Heart right ventricle (tissue), 16 donors: ENCODE measurements at regions of chr14 and their contacts with region 1.

Region 1: DNA sequence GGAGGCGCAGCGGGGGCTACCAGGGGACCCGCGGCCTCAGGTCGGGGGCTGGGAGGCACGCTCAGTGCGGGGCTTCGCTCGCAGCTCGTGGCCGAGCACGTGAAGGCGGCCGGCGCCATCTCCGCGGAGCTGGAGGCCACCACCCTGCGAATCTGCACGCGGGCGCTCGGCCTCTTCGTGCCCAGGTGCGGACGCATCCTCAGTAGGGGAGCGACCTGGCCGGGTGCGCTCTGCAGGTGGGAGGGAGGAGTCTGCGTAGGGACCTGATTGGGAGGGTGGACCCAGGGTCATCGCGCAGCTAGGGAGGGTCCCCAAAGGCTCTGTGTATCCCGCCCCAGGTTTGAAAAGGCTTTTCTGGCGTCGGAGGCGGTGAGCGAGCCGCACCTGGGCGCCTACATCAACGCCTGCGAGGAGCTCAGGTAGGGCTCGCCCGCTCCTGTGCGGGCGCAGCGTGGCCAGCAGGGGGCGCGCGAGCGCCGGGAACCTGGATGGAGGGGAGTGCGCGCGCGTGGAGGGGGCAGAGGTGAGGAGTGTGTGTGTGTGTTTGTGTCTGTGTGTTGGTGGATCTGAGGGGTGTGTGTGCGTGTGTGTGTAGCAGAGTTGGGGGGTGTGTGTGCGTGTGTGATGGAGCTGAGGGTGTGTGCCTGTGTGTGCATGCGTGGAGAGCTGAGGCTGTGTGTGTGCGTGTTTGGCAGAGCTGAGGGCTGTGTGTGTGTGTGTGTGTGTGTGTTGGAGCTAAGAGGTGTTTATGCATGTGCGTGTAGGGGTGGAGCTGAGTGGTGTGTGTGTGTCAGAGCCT is 10.3 kb downstream of the EXOC3L4 start:
- DNase-seq: peak; percentile 50 to 75
- ATAC-seq: peak; percentile 72 to 89 (median 82)
- H3K4me3 ChIP-seq: peak overlapping the region in 1 of 10 donors; percentile 11
- H3K27ac ChIP-seq: no peak overlapping the region
- H3K4me1 ChIP-seq: peaks cover 12 to 43% (median 31%) of the 10 kb centered on the region in 9 donors
- H3K27me3 ChIP-seq: peaks cover 34 to 51% (median 49%) of the 10 kb centered on the region in 7 donors
- CTCF ChIP-seq: peak; percentile 91 to 98 (median 96)

Region 2: DNA sequence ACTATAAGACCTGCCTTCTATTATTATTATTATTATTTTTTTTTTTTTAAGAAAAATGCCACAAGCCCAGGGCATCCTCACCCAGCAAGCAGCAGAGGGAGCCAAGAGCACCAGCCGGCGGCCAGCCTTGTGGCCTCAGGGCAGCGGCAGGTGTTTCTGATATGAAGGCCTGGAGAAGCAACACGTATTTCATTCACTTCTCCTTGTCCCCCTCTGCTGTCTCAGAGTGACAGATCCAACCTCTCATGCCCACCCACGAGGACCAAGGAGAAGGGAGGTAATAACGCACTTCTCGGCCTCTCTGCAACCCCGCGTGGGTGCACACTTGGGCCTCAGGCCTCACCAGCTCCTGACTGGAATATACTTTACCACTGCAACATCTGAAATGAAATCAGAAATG is 72.9 kb before region 1 on chr14:
- intact Hi-C with region 1: no loop called
- DNase-seq: no peak
- ATAC-seq: peak in 3 of 8 donors; percentile 27 to 49 (median 34)
- H3K4me3 ChIP-seq: no peak overlapping the region
- H3K27ac ChIP-seq: peak overlapping the region in 1 of 10 donors; percentile 6
- H3K4me1 ChIP-seq: peaks cover 0 to 53% (median 24%) of the 10 kb centered on the region in 9 donors
- H3K27me3 ChIP-seq: no peaks in the 10 kb centered on the region
- CTCF ChIP-seq: peak in 3 of 9 donors; percentile 4 to 13 (median 9)

Region 3: DNA sequence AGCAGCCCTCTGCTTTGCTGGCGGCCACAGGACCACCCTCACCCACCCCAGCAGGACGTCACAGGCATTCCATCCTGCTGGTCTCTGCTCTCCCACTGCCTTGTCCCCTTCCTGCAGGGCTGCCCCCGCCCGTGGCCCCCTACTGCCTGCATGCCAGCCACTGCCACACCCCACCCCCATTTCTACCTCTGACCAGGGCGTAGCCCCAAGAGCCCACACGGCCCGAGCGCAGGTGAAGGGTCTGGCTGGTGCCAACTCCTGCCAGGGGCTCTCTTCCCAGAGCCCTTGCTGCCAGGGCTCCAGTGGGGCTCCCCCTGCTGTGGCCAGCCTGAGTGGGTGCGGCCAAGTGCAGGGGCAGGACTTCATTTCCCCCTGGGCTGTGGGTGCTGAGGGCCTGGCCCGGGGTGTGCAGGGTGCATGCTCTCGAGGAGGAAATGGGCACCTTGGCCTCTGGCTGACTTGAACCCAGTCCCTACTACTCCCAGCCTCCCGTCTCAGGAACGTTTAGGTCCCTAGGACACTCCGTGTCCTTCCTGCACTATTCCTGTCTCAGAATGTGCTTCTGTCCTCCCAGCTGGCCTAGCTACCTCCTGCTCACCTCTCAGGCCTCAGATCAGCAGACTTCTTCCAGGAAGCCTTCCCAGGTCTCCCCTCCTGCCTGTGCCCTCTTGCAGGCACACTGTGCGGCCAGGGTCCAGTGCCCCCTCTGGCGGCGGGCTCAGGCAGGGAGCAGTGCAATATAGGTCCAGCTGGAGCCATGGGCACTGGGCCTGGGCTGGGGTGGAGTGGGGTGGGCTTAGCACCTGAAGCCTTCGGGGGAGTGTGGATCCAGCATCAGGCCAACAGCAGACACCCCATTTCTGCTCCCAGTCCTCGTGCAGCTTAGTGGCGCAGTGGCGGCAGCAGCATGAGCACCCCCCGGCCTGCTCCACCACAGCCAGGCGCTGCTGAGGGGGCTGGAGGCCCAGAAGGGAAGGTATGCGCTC is 19.5 kb before region 1 on chr14:
- intact Hi-C with region 1: no loop called
- DNase-seq: no peak
- ATAC-seq: no peak
- H3K4me3 ChIP-seq: no peak overlapping the region
- H3K27ac ChIP-seq: no peak overlapping the region
- H3K4me1 ChIP-seq: peaks cover 0 to 8% (median 0%) of the 10 kb centered on the region in 9 donors
- H3K27me3 ChIP-seq: peaks cover 0 to 51% (median 42%) of the 10 kb centered on the region in 7 donors
- CTCF ChIP-seq: peak in 3 of 9 donors; percentile 4 to 12 (median 5)

Region 4: DNA sequence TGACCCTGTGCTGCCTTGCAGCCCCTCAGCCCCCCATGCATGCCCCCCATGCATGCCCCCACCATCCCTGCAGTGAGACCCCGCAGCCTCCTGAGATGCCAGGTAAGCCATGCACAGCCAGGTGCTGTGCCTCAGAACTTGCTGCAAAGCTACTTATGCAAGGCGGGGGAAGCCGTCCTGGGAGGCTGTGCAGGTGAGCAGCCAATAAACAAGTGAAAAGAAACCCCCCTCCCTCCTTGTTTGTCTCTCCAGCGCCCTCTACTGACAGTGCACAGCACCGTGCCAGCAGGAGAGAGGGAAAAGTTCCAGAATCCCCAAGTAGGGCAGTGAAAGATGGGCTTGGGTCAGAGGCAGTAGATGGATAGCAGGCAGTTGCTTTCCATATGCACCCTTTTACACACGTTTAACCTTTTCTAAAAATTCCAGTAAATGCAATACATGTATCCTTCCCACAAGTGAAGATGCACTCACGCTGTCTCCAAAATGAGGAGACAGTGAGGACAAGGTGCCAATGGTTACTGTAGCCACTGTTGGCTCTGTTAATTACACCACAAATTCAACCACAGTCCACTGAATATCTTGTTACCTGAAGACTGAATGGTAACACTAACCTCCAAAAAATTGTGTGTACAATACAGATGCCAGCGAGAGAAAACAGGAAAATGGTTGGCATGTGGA is 36.4 kb after region 1 on chr14:
- intact Hi-C with region 1: loop called in 1 of 10 experiments (anchors 5 kb)
- DNase-seq: peak in 1 of 2 donors; percentile 32
- ATAC-seq: no peak
- H3K4me3 ChIP-seq: no peak overlapping the region
- H3K27ac ChIP-seq: no peak overlapping the region
- H3K4me1 ChIP-seq: peaks cover 0 to 29% (median 19%) of the 10 kb centered on the region in 9 donors
- H3K27me3 ChIP-seq: peaks cover 0 to 36% (median 20%) of the 10 kb centered on the region in 7 donors
- CTCF ChIP-seq: peak; percentile 12 to 71 (median 64)

Region 5: DNA sequence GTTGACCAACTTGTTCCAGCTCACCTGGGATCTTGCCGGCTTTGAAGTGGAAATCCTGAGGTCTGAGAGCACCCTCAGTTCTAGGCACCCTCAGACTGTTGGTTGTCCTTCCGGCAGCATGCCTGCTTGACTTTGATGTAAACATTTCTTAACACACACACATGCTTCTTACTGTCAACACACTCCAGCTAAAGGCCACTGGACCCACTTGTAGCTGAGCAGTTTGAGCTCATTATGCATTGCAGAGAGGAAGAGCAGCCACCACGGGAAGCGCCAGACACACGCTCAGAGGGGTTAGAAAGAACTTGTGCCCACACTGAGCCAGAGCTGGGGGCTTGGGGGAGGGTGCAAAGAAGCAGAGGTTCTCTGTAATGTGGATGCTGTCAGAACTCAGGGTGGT is 74.2 kb after region 1 on chr14:
- intact Hi-C with region 1: loop called in 5 of 10 experiments (anchors 2 to 10 kb)
- DNase-seq: no peak
- ATAC-seq: no peak
- H3K4me3 ChIP-seq: no peak overlapping the region
- H3K27ac ChIP-seq: no peak overlapping the region
- H3K4me1 ChIP-seq: no peaks in the 10 kb centered on the region
- H3K27me3 ChIP-seq: peaks cover 0 to 5% (median 0%) of the 10 kb centered on the region in 7 donors
- CTCF ChIP-seq: no peak

Region 6: DNA sequence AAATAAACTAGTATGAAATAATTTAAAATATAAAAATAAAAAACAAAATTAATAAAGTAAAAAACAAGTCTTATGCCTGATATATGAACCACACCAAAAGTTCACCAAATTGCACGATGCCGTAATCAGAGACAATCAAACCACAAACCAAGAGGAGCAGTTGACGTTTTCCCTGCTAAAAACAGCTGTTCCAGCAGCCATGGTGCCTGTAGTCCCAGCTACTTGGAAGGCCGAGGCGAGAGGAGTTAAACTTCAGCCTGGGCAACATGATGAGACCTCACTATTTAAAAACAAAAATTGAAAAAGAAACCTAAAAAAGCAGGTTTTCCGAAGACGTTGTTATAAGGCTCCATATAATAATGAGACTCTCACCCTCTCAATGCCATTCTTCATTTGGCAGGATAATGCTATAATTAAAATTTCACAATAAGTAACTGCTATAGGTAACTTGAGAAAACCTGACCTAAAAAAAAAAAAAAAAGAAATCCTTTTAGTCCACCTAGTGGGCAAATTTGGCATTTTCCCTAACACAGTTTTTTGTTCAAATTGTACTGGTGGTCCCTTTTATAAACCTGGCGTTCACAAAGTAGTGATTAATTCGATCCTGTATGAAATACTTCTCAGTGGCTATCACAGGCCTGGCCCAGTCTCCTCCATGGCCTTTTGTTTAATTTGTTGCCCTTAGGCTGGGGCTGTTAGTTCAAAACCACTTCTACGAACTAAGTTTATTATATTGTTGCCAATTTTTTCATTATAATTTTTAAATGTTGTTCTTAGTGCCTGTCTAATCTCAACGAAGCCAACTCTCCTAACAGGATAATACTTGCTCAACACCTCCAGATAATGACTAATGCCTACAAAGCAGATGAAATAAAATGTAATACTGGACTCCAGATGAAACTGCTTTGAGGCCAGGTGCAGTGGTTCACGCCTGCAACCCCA is 80.5 kb after region 1 on chr14:
- intact Hi-C with region 1: loop called in 9 of 10 experiments (anchors 1 to 10 kb)
- DNase-seq: no peak
- ATAC-seq: no peak
- H3K4me3 ChIP-seq: no peak overlapping the region
- H3K27ac ChIP-seq: no peak overlapping the region
- H3K4me1 ChIP-seq: peaks cover 0 to 12% (median 10%) of the 10 kb centered on the region in 9 donors
- H3K27me3 ChIP-seq: peaks cover 0 to 49% (median 32%) of the 10 kb centered on the region in 7 donors
- CTCF ChIP-seq: peak; percentile 52 to 73 (median 66)

Region 7: DNA sequence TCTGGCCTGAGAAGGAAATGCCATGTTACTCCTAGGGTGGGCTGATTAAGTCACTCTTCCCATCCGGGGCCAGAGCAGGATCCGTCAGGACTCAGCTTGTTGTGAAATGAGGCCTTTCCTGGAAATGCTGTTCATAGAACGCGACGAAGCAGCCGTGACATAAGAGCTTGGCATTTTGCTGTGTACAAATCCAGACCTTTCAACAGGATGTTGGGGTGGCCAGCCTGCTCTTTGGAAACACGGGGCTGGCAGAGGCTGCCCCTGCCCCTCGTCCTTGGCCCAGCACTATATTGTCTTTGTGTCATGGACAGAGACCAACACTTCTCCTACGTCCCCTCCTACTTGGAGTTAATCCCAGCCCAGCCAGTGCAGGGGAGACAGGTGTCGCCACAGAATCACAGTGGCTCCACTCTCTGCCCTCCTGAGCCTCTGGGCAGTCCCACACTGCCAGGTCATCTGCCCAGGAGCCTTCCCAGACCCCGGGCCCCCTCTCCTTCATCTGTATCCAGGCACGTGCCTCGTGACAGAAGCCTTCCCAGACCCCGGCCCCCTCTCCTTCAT is 210.6 kb after region 1 on chr14:
- intact Hi-C with region 1: no loop called
- DNase-seq: peak in 1 of 2 donors; percentile 23
- ATAC-seq: peak; percentile 28 to 93 (median 60)
- H3K4me3 ChIP-seq: no peak overlapping the region
- H3K27ac ChIP-seq: peak overlapping the region in 3 of 10 donors; percentile 36 to 70 (median 52)
- H3K4me1 ChIP-seq: peaks cover 0 to 18% (median 4%) of the 10 kb centered on the region in 9 donors
- H3K27me3 ChIP-seq: peaks cover 0 to 6% (median 0%) of the 10 kb centered on the region in 7 donors
- CTCF ChIP-seq: no peak

Region 8: DNA sequence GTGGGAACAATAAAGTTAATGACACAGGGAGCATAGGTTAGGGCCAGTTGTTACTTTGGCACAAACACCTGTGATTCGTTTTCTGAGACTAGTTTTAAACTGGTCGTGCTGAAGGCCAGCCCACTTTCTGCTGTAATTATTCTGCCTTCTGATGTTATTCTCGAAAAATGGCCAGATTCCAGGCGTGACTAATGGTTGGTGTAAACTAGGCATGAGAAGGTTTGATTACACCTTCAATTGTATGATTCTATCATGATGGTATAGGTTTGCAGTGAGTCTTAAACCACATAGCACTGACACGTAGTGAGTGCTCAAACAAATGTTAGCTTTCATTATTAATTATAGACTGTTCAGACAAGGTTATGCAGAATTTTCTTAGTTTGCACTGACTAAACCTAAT is 378.7 kb after region 1 on chr14:
- intact Hi-C with region 1: no loop called
- DNase-seq: no peak
- ATAC-seq: no peak
- H3K4me3 ChIP-seq: no peak overlapping the region
- H3K27ac ChIP-seq: no peak overlapping the region
- H3K4me1 ChIP-seq: peaks cover 0 to 13% (median 1%) of the 10 kb centered on the region in 9 donors
- H3K27me3 ChIP-seq: no peaks in the 10 kb centered on the region
- CTCF ChIP-seq: no peak